ENCODE measurements at regions of chr2 and their contacts with region 1.

Region 1: DNA sequence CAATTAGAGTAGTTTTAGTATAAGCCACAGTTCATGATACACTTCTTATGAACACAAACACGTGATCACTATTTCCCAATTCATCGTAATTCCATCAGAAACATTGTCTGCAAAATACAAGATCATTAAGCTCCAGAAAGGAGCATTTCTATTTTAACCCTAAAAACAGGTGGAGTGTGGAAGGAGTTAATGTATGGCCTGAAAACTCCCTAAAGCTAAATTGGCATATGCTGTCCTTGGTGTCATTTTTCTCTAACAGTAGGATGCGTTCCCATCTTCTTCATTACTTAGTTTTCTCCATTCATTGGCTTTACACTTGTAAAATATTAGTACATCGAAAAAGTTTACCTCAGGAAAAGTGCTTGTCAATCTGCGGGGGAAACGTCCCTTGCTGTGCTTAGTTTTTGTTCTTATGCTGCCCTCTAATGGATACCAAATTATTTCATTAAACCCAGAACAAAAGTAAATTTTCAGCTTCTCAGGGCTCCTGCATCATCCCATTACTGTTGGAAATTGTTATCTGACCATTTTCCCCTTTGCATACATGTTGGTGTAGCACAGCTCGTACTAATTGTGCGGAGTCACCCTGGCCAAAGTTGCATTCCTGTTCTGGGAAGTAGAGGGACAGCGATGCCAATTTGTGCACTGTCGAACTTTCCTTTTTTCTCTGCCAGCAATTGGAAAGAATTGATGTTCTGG is 153.4 kb downstream of the GPD2 start:
- DNase-seq: no peak

Region 2: DNA sequence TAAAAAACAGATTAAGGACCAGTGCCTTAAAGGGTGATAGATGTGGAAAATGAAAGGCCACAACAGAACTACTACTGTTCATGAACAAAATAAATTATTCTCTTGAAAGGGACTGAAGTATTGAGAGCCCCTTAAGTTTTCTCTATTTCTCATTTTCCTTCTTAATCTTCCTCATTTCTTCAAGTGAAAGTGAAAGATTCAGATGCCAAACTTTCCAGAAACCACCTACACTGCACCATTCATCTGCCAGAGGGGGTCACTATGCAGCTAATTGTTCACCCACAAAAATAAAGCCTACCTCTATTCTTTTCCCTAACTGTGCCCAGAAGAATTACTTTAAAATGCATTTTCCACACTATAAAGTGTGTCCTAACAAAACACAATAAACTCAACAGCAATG is 397.1 kb before region 1 on chr2:
- intact Hi-C with region 1: loop called (anchors 10 kb)
- DNase-seq: no peak